Heart right ventricle (tissue), 16 donors: ENCODE measurements at regions of chr20 and their contacts with region 1.

Region 1: GRCh38 chr20:36035745-36036144 is 67.4 kb downstream of the CNBD2 start:
- DNase-seq: no peak
- ATAC-seq: no peak
- H3K4me3 ChIP-seq: no peak overlapping the region
- H3K27ac ChIP-seq: no peak overlapping the region
- H3K4me1 ChIP-seq: peaks cover 0 to 4% (median 0%) of the 10 kb centered on the region in 9 donors
- H3K27me3 ChIP-seq: no peaks in the 10 kb centered on the region
- CTCF ChIP-seq: no peak

Region 2: DNA sequence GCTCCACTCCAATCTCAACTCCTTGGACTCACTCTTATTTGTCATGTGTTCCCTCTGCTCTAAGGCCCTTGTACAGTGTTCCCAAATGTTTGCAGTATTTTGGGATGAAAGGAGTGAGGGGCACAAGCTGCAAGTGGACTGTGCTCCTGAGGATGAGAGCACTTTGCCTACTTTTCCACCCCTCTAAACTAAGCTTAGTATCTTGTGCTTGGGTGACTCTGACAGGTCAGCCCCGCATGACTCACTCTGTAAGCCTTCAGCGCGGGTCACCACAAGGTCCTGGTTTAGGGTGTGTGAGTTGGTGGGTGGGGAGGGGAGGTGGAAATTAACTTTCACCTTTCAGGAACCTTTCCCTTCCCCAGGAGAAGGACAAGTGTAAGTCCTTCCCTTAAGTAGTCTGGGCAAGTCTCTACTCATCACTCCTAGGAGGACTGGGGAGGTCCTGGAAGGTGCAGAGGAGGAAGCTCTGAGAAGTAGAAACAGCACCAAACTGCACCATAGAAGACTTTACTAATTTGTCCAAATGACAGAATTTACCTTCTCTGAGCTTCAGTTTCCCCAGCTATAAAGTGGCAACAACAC is 50.0 kb after region 1 on chr20:
- intact Hi-C with region 1: loop called in 1 of 10 experiments (anchors 10 kb)
- DNase-seq: no peak
- ATAC-seq: peak in 2 of 8 donors; percentile 48 to 56
- H3K4me3 ChIP-seq: no peak overlapping the region
- H3K27ac ChIP-seq: no peak overlapping the region
- H3K4me1 ChIP-seq: peaks cover 0 to 4% (median 0%) of the 10 kb centered on the region in 9 donors
- H3K27me3 ChIP-seq: peaks cover 0 to 23% (median 0%) of the 10 kb centered on the region in 7 donors
- CTCF ChIP-seq: no peak